Keratinocyte (primary cell): ENCODE measurements at regions of chr1 and their contacts with region 1.

Region 1: GRCh38 chr1:172909606-172910326 is 141.0 kb downstream of the TNFSF18 start:
- DNase-seq: no peak
- H3K4me3 ChIP-seq: no peak overlapping the region
- H3K27ac ChIP-seq: peak overlapping the region; percentile 64
- H3K4me1 ChIP-seq: peaks cover 30% of the 10 kb centered on the region
- H3K27me3 ChIP-seq: no peaks in the 10 kb centered on the region
- CTCF ChIP-seq: no peak

Region 2: DNA sequence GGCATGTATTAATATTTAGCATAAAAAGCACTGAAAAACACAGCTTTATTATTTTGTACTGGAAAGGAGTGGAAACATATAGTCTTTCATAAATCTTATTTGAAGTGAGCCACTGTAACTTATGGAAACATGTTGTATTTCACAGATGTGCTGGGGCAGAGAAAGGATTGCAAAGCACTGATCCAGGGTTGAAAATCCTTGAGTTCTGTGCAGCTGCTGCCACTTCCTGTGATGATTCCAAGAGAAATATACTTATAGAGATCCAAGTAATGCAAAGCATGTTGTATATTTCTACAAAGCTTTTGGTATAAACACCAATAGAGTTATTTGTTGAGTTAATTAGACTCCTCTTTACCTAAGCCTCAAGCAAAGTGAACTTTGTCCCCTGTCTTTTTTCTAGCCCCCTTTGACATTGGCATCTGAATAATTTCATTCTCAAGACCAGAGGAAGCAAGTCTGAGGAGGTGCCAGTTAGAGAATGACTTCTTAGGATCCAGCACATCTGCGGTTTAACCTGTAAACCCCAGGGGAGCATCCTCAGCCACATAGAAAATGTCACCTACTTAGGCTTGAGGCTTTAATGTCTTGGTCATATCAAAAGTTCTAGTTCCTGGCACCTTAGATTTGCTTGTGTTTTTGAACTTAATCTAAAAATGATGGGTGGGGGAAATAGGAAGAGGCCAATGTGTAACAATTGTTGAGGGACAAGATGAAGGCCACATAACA is 77.6 kb before region 1 on chr1:
- dilution Hi-C with region 1: loop called (anchors 5 kb)
- DNase-seq: no peak
- H3K4me3 ChIP-seq: no peak overlapping the region
- H3K27ac ChIP-seq: no peak overlapping the region
- H3K4me1 ChIP-seq: peaks cover 2% of the 10 kb centered on the region
- H3K27me3 ChIP-seq: no peaks in the 10 kb centered on the region
- CTCF ChIP-seq: no peak